ENCODE measurements at regions of chr7 and their contacts with region 1.

Region 1: DNA sequence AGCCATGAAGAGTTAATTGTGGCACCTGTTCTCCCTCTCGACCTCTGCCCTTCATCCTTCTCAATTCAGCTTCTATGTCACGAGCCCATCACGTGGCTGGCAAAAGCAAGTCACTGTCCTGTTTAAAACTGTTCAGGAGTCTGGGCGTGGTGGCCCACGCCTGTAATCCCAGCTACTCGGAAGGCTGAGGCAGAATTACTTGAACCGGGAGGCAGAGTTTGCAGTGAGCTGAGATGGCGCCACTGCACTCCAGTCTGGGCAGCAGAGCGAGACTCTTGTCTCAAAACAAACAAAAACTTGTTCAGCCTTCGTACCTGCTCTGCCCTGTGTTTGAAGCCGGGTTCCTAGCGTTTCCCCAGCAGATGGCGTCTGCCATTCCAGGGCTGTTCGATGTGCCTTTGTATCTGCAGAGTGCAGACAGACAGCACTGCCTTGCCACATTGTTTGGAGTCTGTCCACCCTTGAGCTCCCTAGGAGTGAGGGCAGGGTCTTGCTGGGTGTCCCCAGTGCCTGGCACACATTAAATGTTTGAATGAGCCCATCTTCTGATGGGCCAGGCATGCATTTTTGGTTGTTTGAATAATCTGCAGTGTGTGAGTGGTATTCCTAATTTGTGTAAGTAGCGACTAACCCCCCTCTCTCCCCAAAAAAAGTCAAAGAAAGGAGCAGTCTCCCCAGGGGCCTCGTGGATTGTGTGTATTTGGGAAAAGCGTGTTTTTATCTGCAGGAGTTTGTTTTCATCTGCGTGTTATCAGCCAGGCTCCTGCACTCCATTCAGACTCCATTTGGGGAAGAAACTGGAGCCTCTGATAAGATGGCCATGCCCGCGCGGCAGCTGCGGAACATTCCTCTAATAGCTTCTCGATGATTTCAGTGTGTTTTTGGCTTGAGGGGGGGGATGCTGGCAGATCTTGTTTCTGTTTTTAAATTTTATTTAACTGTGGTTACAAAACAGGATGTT is 61.2 kb downstream of the DNAJB6 start:
- DNase-seq: peak; percentile 63
- H3K4me3 ChIP-seq: peak overlapping the region; percentile 33
- H3K27ac ChIP-seq: peak overlapping the region; percentile 90
- H3K4me1 ChIP-seq: peaks cover 82% of the 10 kb centered on the region
- H3K27me3 ChIP-seq: no peaks in the 10 kb centered on the region
- CTCF ChIP-seq: peak; percentile 56

Region 2: DNA sequence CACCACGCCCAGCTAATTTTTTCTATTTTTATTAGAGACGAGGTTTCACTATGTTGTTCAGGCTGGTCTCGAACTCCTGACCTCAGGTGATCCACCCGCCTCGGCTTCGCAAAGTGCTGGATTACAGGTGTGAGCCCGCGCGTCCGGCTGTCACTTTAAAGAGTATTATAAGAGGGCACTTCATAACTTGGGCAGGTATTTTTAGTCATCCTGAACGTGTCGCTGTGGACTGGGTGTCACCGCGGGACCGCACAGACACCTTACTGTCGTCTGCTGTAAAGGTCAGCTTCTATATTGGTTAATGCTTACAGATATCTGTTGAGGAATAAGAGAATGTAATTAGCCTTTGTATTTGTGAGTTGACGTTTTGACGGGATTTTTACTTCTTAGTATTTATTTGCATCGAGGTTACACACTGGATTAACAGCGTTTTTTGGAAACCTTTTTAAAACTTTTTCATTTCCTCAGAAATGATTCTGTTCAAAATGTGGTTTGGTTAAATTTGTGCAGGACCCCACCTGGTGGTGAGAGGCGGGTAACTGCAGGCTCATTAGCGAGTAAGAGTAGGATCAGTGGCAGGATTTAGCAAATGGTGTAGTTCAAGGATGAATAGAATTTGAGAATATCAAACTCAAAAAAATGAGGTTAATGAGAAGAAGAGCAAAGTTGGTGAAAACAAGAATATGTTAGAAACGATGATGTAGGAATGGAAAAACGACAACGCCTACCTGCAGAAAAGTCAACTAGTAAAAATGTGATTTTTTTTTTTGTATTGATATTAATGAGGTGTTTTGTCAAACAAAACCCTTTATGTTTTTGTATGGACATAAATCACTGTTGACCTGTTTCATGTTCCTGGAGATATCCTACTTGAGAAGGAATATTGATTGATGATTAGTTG is 58.0 kb before region 1 on chr7:
- intact Hi-C with region 1: loop called (anchors 10 kb)
- DNase-seq: peak; percentile 60
- H3K4me3 ChIP-seq: peak overlapping the region; percentile 79
- H3K27ac ChIP-seq: peak overlapping the region; percentile 91
- H3K4me1 ChIP-seq: peaks cover 88% of the 10 kb centered on the region
- H3K27me3 ChIP-seq: no peaks in the 10 kb centered on the region
- CTCF ChIP-seq: peak; percentile 95

Region 3: GRCh38 chr7:157544980-157545680 is 147.1 kb after region 1 on chr7:
- intact Hi-C with region 1: no loop called
- DNase-seq: no peak
- H3K4me3 ChIP-seq: no peak overlapping the region
- H3K27ac ChIP-seq: no peak overlapping the region
- H3K4me1 ChIP-seq: no peaks in the 10 kb centered on the region
- H3K27me3 ChIP-seq: peaks cover 30% of the 10 kb centered on the region
- CTCF ChIP-seq: no peak

Measured in left ventricle myocardium inferior (tissue), 1 donor.